Activated CD4-positive, alpha-beta memory T cell treated with anti-CD3 and anti-CD28 coated beads, Interleukin-2, amount 10 ng/mL, durations not matched to agents 7 days and 5 days (primary cell): ENCODE measurements at regions of chr3 and their contacts with region 1.

Region 1: GRCh38 chr3:27712136-27713077 is 9.7 kb downstream of the EOMES start:
- DNase-seq: peak; percentile 84
- H3K4me3 Mint-ChIP-seq: peak overlapping the region; percentile 79
- H3K27ac Mint-ChIP-seq: peak overlapping the region; percentile 64
- H3K4me1 Mint-ChIP-seq: peaks cover 35% of the 10 kb centered on the region
- H3K27me3 Mint-ChIP-seq: peaks cover 49% of the 10 kb centered on the region

Region 2: GRCh38 chr3:27728195-27729087 is 16.0 kb after region 1 on chr3:
- CTCF ChIA-PET with region 1: interaction called, 109 read pairs
- POLR2A ChIA-PET with region 1: interaction called, 35 read pairs
- DNase-seq: peak; percentile 30
- H3K4me3 Mint-ChIP-seq: peak overlapping the region; percentile 35
- H3K27ac Mint-ChIP-seq: no peak overlapping the region
- H3K4me1 Mint-ChIP-seq: peaks cover 47% of the 10 kb centered on the region
- H3K27me3 Mint-ChIP-seq: peaks cover 88% of the 10 kb centered on the region

Region 3: GRCh38 chr3:27758083-27758482 is 45.7 kb after region 1 on chr3:
- CTCF ChIA-PET with region 1: no interaction called
- POLR2A ChIA-PET with region 1: no interaction called
- DNase-seq: no peak
- H3K4me3 Mint-ChIP-seq: no peak overlapping the region
- H3K27ac Mint-ChIP-seq: no peak overlapping the region
- H3K4me1 Mint-ChIP-seq: peaks cover 7% of the 10 kb centered on the region
- H3K27me3 Mint-ChIP-seq: peaks cover 2% of the 10 kb centered on the region

Region 4: GRCh38 chr3:28317438-28318022 is 605.1 kb after region 1 on chr3:
- CTCF ChIA-PET with region 1: interaction called, 25 read pairs
- POLR2A ChIA-PET with region 1: interaction called, 3 read pairs
- DNase-seq: peak; percentile 37
- H3K4me3 Mint-ChIP-seq: no peak overlapping the region
- H3K27ac Mint-ChIP-seq: no peak overlapping the region
- H3K4me1 Mint-ChIP-seq: peaks cover 10% of the 10 kb centered on the region
- H3K27me3 Mint-ChIP-seq: no peaks in the 10 kb centered on the region

Region 5: GRCh38 chr3:28334552-28334951 is 622.1 kb after region 1 on chr3:
- CTCF ChIA-PET with region 1: interaction called, 103 read pairs
- POLR2A ChIA-PET with region 1: interaction called, 3 read pairs
- DNase-seq: no peak
- H3K4me3 Mint-ChIP-seq: no peak overlapping the region
- H3K27ac Mint-ChIP-seq: no peak overlapping the region
- H3K4me1 Mint-ChIP-seq: peaks cover 6% of the 10 kb centered on the region
- H3K27me3 Mint-ChIP-seq: no peaks in the 10 kb centered on the region